ENCODE measurements at regions of chr18 and their contacts with region 1.

Region 1: DNA sequence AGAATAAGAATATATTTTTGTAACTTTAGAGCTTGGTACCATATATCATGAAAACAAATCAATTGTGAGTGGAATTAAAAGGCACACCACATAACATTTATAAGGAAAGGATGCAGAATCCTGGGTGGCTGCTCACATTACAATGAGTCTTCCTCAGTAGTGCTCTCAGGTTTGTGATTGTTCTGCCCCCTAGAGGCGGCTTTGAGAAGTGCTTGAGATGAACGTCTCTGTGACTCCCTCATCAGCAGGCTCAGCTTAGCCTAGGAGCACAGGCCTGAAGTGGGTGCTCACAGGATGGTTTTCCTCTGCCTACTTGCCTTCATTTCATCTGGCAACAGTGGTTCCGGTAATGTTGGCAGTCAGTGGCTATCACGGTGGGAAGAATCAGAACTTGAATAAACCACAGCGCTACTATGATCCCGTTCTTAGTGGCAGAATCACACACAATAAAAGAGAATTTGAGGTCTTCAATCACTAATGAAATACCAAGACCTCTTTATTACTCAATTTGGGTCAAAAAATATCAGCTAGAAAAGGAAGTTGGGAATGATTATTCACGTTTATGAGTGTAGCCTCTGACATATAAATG is 38.1 kb upstream of the B4GALT6 start:
- DNase-seq: peak; percentile 80
- ATAC-seq: peak; percentile 75
- H3K4me3 ChIP-seq: no peak overlapping the region
- H3K27ac ChIP-seq: no peak overlapping the region
- H3K4me1 ChIP-seq: no peaks in the 10 kb centered on the region
- H3K27me3 ChIP-seq: no peaks in the 10 kb centered on the region
- CTCF ChIP-seq: peak; percentile 67

Region 2: DNA sequence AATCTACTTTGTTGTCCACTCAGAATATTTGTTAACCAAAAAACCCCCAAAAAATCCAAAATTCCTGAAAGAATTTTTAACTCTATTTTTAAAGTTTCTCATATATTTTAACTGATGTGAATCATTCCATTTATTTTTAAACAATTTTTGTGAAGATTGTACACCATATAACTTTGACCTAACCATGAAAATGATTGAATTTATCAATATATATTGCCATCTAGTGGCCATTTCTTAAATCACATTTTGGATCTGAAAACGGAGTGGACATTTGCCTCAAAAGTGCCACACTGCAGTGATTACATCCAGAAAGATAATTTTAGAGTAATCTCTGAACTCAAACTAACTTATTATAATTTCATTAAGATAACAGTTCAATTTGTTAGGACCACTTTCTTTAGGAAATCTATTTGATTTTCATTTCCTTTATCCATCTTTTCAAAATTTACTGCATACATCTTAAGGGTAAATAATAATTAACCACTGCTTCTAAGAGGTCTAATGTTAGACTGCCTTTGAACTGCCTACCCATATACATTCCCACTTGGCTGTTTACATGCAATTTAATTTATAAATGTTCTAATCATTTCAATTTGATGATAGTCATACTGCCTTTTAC is 751.0 kb before region 1 on chr18:
- CTCF ChIA-PET with region 1: no interaction called
- POLR2A ChIA-PET with region 1: no interaction called
- intact Hi-C with region 1: loop called (anchors 1 kb)
- DNase-seq: peak; percentile 81
- ATAC-seq: no peak
- H3K4me3 ChIP-seq: no peak overlapping the region
- H3K27ac ChIP-seq: no peak overlapping the region
- H3K4me1 ChIP-seq: no peaks in the 10 kb centered on the region
- H3K27me3 ChIP-seq: no peaks in the 10 kb centered on the region
- CTCF ChIP-seq: peak; percentile 70

Region 3: GRCh38 chr18:31424383-31424988 is 298.0 kb before region 1 on chr18:
- CTCF ChIA-PET with region 1: no interaction called
- POLR2A ChIA-PET with region 1: no interaction called
- intact Hi-C with region 1: no loop called
- DNase-seq: peak; percentile 46
- ATAC-seq: peak; percentile 59
- H3K4me3 ChIP-seq: no peak overlapping the region
- H3K27ac ChIP-seq: no peak overlapping the region
- H3K4me1 ChIP-seq: peaks cover 4% of the 10 kb centered on the region; the same call in 1 of the 2 replicates
- H3K27me3 ChIP-seq: no peaks in the 10 kb centered on the region
- CTCF ChIP-seq: peak; percentile 76

Region 4: DNA sequence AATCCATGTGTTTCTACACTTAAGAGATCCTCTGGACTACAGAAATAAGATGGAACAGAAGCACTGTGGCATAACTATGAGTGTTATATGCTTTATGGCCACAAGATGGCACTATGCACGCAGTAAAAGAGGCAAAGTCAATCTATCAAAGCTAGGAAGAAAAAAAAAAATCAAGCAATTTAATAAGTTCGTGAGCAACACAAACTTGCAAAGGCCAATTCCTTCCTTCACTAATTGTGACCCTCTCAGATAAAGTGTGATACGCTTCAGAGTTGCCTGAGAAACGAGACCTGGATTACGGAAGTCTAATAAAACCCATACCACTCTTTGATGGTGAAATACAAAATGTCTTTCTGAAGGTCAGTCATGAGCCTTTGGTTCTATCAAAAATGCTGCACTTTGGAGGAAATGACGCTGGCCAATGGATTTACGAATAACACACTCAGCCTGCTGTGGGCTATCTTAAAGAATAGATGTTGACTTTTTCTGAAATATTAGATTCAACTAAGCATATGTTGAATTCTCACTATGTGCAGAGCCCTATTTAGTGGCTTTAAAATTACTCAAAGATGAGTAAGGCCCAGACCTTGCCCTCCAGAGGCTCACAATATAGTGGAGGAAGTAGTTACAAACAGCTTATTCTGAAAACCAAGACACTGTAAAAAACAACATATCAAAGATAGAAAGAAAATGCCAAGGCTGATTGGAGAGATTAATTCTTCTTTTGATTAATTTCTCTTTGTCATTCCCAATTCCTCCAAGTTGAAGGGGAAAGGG is 166.3 kb before region 1 on chr18:
- CTCF ChIA-PET with region 1: interaction called, 5 read pairs
- POLR2A ChIA-PET with region 1: no interaction called
- intact Hi-C with region 1: loop called (anchors 1 kb)
- DNase-seq: peak; percentile 64
- ATAC-seq: peak; percentile 64
- H3K4me3 ChIP-seq: no peak overlapping the region; the same call in 1 of the 2 replicates
- H3K27ac ChIP-seq: no peak overlapping the region
- H3K4me1 ChIP-seq: peaks cover 7% of the 10 kb centered on the region; the same call in 1 of the 2 replicates
- H3K27me3 ChIP-seq: no peaks in the 10 kb centered on the region
- CTCF ChIP-seq: peak; percentile 65

Region 5: DNA sequence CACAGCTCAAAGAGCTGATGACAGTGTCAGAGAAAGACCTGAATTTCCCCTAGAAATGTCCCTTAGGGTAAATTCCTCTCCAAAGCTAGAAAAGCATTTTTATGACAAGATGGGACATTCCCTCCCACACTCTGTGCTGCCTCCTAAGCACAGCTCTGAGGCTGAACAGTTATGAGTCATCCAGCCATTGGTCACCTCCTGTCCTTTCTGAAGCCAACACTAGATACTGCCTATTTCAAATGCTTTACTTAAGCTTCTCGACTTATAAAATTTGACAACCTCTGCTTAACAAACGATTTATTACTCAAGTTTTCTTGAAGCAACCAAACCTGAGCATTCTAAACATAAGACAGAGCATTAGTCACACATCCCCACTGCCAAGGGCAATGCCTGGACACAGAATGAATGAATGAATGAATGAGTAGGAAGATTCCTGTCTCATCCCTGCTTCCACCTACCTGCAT is 73.5 kb before region 1 on chr18:
- CTCF ChIA-PET with region 1: no interaction called
- POLR2A ChIA-PET with region 1: no interaction called
- intact Hi-C with region 1: loop called (anchors 5 kb)
- DNase-seq: peak; percentile 83
- ATAC-seq: peak; percentile 98
- H3K4me3 ChIP-seq: no peak overlapping the region
- H3K27ac ChIP-seq: peak overlapping the region; percentile 29
- H3K4me1 ChIP-seq: peaks cover 51% of the 10 kb centered on the region
- H3K27me3 ChIP-seq: no peaks in the 10 kb centered on the region
- CTCF ChIP-seq: no peak

Region 6: DNA sequence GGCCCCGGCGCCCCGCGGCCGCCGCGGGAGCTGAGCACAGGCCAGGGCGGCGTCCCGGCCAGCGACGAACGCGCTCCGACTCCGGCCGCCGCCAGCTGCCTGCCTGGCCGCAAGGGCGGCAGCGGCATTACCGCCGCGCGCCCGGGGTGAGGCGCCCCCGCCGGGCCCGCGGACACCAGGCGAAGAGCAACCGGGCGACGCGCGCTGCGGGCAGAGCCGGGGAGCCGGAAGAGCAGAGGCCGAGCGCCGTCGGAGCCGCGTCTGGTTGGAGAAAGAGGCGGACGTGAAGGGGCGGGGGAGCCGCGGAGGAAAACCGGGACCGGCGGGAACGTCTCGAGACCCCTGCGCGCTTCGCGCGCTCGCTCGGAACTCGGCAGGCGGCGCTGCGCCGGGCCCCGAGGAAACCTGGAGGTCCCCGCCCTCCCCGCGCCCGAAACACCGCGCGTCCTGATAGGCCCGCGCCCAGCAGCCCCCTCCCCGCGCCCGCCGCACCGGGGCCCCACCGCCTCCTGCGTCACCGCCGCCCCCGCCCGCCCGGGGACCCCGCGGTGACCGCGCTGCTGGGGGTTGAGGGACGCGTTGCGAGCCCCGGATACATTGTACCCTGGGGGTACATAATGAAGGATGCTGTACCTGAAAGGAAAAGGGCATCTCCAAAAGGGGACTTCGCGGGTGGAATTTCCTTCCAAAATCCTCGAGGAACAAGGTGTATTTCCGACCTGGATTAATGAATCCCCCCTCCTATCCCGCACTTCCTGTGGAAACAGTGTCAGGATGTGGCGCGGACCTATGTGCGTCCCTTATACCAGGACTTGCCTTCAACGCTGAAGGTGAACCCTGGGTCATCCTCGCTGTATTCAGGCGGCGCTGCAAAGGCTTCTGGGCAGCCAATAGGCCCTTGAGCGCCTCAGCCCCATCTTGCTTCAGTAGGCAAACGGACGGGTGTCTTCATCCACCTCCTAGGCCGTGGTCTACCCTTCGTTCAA is 37.1 kb before region 1 on chr18:
- CTCF ChIA-PET with region 1: no interaction called
- POLR2A ChIA-PET with region 1: no interaction called
- intact Hi-C with region 1: loop called (anchors 2 kb)
- DNase-seq: peak; percentile 48
- ATAC-seq: peak; percentile 63
- H3K4me3 ChIP-seq: peak overlapping the region; percentile 63
- H3K27ac ChIP-seq: no peak overlapping the region
- H3K4me1 ChIP-seq: peaks cover 28% of the 10 kb centered on the region
- H3K27me3 ChIP-seq: no peaks in the 10 kb centered on the region
- CTCF ChIP-seq: no peak